MCF 10A (cell line): ENCODE measurements at regions of chr17 and their contacts with region 1.

Region 1: GRCh38 chr17:4939796-4940624 is at the starts of genes RNF167 and SLC25A11:
- DNase-seq: peak; percentile 99
- H3K4me3 Mint-ChIP-seq: peak within 1 kb of the TSS; percentile 91
- H3K27ac Mint-ChIP-seq: peak within 1 kb of the TSS; percentile 98
- H3K4me1 Mint-ChIP-seq: peaks cover 44% of the 10 kb centered on the region
- H3K27me3 Mint-ChIP-seq: no peaks in the 10 kb centered on the region
- CTCF ChIP-seq: no peak
- total RNA-seq, gene RNF167: 100.0 and 109 TPM in 2 replicates
- total RNA-seq, gene SLC25A11: 46.8 and 54.5 TPM in 2 replicates

Region 2: GRCh38 chr17:4703330-4703691 is 236.7 kb before region 1 on chr17:
- CTCF ChIA-PET with region 1: no interaction called
- POLR2A ChIA-PET with region 1: interaction called, 13 read pairs
- intact Hi-C with region 1: no loop called
- DNase-seq: no peak
- H3K4me3 Mint-ChIP-seq: peak overlapping the region; percentile 88
- H3K27ac Mint-ChIP-seq: peak overlapping the region; percentile 7
- H3K4me1 Mint-ChIP-seq: peaks cover 30% of the 10 kb centered on the region
- H3K27me3 Mint-ChIP-seq: no peaks in the 10 kb centered on the region
- CTCF ChIP-seq: no peak

Region 3: DNA sequence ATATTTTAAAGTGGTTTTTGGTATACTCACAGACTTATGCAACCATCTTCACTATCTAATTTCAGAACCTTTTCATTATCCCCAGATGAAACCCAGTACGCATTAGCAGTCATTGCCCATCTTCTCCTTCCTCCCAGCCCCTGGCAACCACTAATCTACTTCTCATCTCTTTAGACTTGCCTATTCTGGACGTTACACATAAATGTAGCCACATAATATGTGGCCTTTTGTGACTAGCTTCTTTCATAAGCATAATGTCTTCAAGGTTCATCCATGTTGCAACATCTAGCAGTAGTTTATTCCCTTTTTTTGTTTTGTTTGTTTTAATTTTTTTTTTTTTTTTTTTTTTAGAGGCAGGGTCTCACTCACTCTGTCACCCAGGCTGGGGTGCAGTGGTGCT is 69.2 kb before region 1 on chr17:
- CTCF ChIA-PET with region 1: no interaction called
- POLR2A ChIA-PET with region 1: no interaction called
- intact Hi-C with region 1: no loop called
- DNase-seq: no peak
- H3K4me3 Mint-ChIP-seq: no peak overlapping the region
- H3K27ac Mint-ChIP-seq: peak overlapping the region; percentile 56
- H3K4me1 Mint-ChIP-seq: peaks cover 20% of the 10 kb centered on the region
- H3K27me3 Mint-ChIP-seq: no peaks in the 10 kb centered on the region
- CTCF ChIP-seq: no peak

Region 4: GRCh38 chr17:4920351-4921048 is 19.5 kb before region 1 on chr17:
- CTCF ChIA-PET with region 1: interaction called, 6 read pairs
- POLR2A ChIA-PET with region 1: interaction called, 51 read pairs
- intact Hi-C with region 1: loop called (anchors 2 kb)
- DNase-seq: peak; percentile 83
- H3K4me3 Mint-ChIP-seq: peak overlapping the region; percentile 39
- H3K27ac Mint-ChIP-seq: peak overlapping the region; percentile 74
- H3K4me1 Mint-ChIP-seq: peaks cover 16% of the 10 kb centered on the region
- H3K27me3 Mint-ChIP-seq: no peaks in the 10 kb centered on the region
- CTCF ChIP-seq: no peak

Region 5: GRCh38 chr17:4986951-4987766 is 47.1 kb after region 1 on chr17 and contains the start of gene CAMTA2:
- CTCF ChIA-PET with region 1: interaction called, 3 read pairs
- POLR2A ChIA-PET with region 1: interaction called, 22 read pairs
- intact Hi-C with region 1: no loop called
- DNase-seq: peak; percentile 67
- H3K4me3 Mint-ChIP-seq: peak within 1 kb of the TSS; percentile 87
- H3K27ac Mint-ChIP-seq: peak within 1 kb of the TSS; percentile 84
- H3K4me1 Mint-ChIP-seq: peaks cover 28% of the 10 kb centered on the region
- H3K27me3 Mint-ChIP-seq: no peaks in the 10 kb centered on the region
- CTCF ChIP-seq: peak; percentile 60
- total RNA-seq, gene CAMTA2: 126 and 154 TPM in 2 replicates

Region 6: DNA sequence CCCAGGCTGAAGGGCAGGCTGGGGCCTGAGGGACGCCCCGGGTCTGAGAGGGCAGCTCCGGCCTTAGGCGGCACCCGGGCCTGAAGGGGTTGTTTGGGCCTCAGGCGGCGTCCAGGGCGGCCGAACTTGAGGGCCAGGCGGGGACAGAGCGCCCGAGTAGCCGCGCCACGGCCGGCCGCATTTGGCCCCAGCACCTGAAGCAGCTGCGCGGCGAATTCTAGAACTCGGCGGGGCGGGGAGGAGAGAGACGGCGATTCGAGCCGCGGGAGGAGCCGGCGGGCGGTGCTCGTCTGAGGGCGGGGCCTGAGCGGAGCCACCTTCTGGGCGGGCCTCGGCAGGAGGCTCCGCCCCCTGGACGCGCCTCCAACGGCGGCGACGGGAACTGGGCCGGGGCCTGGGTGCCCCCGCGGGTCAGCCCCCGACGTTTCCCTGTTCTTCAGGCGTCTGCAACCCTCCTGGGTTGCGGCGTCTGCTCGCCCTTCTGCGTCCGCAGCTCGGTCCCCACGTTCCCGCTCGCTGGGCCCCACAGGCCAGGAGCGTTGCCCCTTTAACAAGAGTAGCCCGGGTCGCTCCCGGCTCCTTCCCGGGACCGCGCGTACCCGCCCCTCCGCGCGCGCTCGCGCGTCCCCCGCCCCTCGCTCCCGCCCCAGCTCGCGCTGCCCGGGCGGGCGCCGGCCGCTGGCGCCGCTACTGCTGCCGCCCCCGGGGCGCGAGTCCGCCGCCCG is 57.5 kb after region 1 on chr17 and contains the starts of genes INCA1 and KIF1C:
- CTCF ChIA-PET with region 1: no interaction called
- POLR2A ChIA-PET with region 1: interaction called, 23 read pairs
- intact Hi-C with region 1: no loop called
- DNase-seq: peak; percentile 90
- H3K4me3 Mint-ChIP-seq: peak within 1 kb of the TSS; percentile 97
- H3K27ac Mint-ChIP-seq: peak within 1 kb of the TSS; percentile 86
- H3K4me1 Mint-ChIP-seq: peaks cover 23% of the 10 kb centered on the region
- H3K27me3 Mint-ChIP-seq: no peaks in the 10 kb centered on the region
- CTCF ChIP-seq: no peak
- total RNA-seq, gene INCA1: 0.44 and 0.49 TPM in 2 replicates
- total RNA-seq, gene KIF1C: 84.8 and 100 TPM in 2 replicates

Region 7: DNA sequence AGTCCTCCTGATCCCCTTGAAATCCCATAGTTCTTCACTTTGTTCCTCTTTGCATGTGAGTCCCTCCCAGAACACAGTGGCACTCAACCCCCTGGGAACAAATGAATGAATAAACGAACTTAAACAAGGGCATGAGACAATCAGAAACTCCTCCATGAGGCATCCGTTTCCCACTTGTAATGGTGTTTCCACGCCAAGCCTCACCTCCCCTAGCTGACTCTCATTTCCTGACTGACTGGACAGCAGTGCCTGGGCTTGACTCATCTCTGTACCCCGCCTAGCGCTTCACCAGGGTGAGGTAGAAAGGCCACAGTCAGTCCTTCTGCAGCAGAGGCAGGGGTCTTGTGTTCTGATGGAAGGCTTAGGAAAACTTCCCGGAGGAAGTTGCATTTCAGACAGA is 71.9 kb after region 1 on chr17:
- CTCF ChIA-PET with region 1: no interaction called
- POLR2A ChIA-PET with region 1: no interaction called
- intact Hi-C with region 1: no loop called
- DNase-seq: no peak
- H3K4me3 Mint-ChIP-seq: no peak overlapping the region
- H3K27ac Mint-ChIP-seq: peak overlapping the region; percentile 69
- H3K4me1 Mint-ChIP-seq: peaks cover 8% of the 10 kb centered on the region
- H3K27me3 Mint-ChIP-seq: no peaks in the 10 kb centered on the region
- CTCF ChIP-seq: no peak

Region 8: GRCh38 chr17:5122586-5123342 is 182.8 kb after region 1 on chr17:
- CTCF ChIA-PET with region 1: no interaction called
- POLR2A ChIA-PET with region 1: no interaction called
- intact Hi-C with region 1: no loop called
- DNase-seq: no peak
- H3K4me3 Mint-ChIP-seq: no peak overlapping the region
- H3K27ac Mint-ChIP-seq: no peak overlapping the region
- H3K4me1 Mint-ChIP-seq: no peaks in the 10 kb centered on the region
- H3K27me3 Mint-ChIP-seq: peaks cover 57% of the 10 kb centered on the region
- CTCF ChIP-seq: no peak